ENCODE measurements at regions of chr9 and their contacts with region 1.

Region 1: GRCh38 chr9:72262063-72262462 is 102.9 kb downstream of the ZFAND5 start:
- DNase-seq: no peak
- H3K4me3 ChIP-seq: no peak overlapping the region
- H3K27ac ChIP-seq: no peak overlapping the region
- H3K4me1 ChIP-seq: no peaks in the 10 kb centered on the region
- H3K27me3 ChIP-seq: no peaks in the 10 kb centered on the region
- CTCF ChIP-seq: no peak
- POLR2A ChIP-seq: no peak

Region 2: GRCh38 chr9:72041775-72042194 is 220.3 kb before region 1 on chr9:
- intact Hi-C with region 1: loop called (anchors 10 kb)
- DNase-seq: peak; percentile 73
- H3K4me3 ChIP-seq: no peak overlapping the region
- H3K27ac ChIP-seq: no peak overlapping the region
- H3K4me1 ChIP-seq: peaks cover 4% of the 10 kb centered on the region
- H3K27me3 ChIP-seq: no peaks in the 10 kb centered on the region
- CTCF ChIP-seq: no peak
- POLR2A ChIP-seq: no peak

Region 3: DNA sequence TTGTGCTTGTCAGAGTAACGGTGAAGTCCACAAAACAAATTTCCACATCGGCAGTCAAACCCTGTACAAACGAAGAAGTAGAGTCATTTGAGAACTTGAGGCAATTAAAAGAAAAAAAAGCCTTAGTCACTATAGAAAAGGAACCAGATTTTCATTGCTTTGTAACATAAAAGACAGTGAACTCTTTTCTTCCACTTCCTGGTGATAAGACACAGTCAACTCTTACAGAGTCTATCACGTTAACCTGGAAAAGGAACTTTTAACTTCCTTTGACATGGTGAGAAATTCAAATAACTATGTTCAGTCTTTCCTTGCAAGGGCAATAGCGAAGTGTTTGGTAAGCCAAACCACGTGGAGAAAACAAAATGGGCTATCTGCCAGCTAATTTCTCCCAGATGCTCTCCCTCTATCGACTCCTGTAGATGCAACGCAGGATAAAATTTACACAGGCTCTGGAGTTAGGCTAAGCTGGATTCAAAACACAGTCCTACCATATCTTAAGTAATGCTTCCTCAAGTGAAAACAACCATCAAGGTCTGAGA is 94.0 kb after region 1 on chr9:
- intact Hi-C with region 1: no loop called
- DNase-seq: no peak
- H3K4me3 ChIP-seq: no peak overlapping the region
- H3K27ac ChIP-seq: peak overlapping the region in 1 of 2 donors; percentile 14
- H3K4me1 ChIP-seq: peaks cover 48% of the 10 kb centered on the region
- H3K27me3 ChIP-seq: no peaks in the 10 kb centered on the region
- CTCF ChIP-seq: no peak
- POLR2A ChIP-seq: no peak

Measured in testis (tissue), 5 donors.